Left ventricle myocardium superior (tissue), 1 donor: ENCODE measurements at regions of chr20 and their contacts with region 1.

Region 1: DNA sequence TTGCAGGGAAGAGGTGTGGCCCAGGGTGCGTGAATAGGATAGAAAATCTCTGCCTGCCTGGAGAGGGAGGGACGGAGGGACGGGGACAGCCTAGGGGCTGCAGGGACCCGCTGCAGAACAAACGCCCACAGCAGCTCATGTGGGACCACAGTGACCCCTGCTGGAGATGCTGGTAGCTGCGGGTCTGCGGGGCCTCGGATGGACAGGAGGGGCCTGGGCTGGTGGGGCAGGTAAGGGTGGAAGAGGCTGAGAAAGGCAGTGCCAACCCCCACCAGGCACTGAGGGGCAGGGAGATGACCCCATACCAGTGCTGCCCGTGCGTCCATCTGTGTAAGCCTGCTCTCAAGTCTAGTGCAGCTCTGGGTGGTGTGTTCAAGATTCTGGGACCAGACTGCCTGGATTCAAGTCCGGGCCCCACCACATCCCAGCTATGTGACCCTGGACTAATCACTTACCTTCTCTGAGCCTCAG is 39.4 kb downstream of the KIAA1755 start:
- DNase-seq: peak; percentile 79
- ATAC-seq: peak; percentile 67

Region 2: DNA sequence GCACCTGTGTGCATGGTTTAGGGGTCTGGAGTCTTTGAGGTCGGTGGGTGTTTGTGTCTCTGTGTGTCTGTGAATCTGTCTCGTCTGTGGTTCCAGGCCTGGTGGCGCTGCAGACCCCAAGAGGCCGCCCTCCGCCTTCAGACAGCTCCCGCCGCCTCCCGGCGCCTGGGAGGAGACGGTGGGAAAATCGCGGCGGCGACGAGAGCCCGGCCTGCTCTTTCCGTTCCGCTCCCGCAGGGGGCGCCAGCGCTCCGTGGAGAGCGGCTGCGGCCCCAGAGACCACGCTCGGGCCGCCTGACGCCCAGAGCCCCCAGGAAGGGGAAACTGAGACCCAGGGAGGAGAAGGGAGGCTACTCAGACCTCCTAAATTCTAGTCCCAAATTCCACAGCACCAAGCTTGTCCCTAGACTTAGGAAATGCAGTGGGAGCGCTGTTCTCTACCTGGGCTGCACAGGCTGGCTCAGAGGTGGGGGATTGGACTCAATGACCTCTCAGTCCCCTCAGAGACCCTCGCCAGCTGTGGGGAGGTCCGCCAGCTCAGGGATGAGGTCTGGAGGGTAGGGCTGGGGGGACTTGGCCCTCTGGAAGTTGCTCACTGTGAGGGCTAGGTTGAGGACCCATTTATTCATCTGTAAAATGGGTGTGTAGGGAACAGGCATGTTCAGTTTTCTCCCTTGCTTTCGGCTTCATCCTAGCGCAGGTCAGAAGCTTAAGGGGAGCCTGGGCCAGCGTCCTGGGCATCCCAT is 656.6 kb before region 1 on chr20:
- intact Hi-C with region 1: loop called (anchors 10 kb)
- DNase-seq: peak; percentile 65
- ATAC-seq: peak; percentile 73

Region 3: GRCh38 chr20:38057351-38057972 is 163.7 kb before region 1 on chr20:
- intact Hi-C with region 1: loop called (anchors 2 kb)
- DNase-seq: peak; percentile 94
- ATAC-seq: peak; percentile 90